Dendritic cell treated with granulocyte-macrophage colony-stimulating factor and Interleukin-4, amounts not matched to agents 40 ng/mL and 50 ng/mL, for 4 days (primary cell): ENCODE measurements at regions of chr2 and their contacts with region 1.

Region 1: DNA sequence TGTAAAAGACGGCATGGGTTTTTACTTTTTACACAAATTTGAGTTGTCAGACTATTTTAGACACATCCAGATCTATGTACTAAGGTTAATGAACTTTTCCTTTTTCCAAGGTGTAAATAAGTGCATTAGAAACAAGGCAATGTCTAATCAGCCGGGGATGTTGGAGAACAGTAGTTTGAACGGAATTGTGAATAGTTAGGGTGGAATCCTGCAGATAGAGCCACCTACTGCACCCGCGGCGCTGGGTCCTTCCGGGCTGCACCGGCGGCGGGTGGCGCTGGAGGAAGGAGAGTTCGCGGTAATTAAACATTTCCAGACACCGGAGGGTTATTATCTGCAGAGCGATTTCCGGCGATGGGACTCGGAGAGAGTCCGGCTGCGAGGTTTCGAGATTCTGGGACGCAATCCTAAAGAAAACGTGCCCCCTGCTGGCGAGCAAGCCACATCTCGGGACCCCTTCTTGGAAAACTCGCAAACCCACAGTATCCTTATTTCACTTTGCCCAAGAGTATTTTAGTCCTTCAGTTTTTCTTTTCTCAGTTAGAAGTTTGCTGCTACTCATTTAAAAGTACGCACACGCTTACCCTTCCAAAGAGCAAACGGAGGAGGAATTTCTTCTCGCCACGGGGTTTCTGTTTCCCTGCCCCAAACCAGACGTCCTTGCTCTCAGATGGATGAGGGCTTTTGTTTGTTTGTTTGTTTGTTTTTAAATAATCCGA is 4.5 kb upstream of the OSR1 start:
- H3K4me3 Mint-ChIP-seq: peak overlapping the region; percentile 87
- H3K27ac Mint-ChIP-seq: peak overlapping the region; percentile 42
- H3K4me1 Mint-ChIP-seq: peaks cover 36% of the 10 kb centered on the region
- H3K27me3 Mint-ChIP-seq: peaks cover 91% of the 10 kb centered on the region

Region 2: DNA sequence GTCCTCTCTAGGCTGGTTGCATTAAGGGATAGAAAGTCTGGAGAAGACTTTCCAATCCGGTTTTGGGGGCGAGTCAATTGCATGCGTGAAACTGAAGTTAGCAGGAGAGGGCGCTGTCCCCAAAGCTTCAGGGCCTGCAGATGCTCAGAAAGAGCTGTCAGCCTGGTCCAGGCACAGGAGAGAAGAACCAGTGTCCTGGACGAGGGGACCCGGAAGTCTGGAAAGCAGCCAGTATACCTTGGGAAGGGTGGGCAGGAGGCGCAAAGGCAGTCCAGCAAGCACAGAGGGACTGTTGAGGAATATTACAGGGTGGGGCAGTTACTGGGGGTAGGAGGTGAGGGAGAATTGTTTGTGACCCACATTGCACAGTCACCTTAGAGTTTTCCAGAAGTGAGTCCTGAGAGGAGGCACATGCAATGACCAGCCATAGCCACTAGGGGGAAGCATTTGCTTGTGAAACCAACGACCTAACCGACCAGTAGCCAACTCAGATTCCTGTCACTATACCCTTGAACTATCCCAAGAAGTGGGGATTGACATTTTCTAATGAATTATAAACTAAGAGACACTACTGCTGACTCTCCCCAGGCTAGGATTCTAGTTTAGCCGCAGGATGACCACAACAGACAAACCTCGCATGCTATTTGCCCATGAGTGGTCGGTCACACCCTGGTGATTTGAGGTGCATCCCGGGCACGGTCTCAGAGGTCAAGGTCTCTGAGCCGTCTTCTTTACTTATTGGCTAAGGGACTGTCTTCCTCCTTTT is 975.3 kb before region 1 on chr2:
- intact Hi-C with region 1: loop called (anchors 10 kb)
- H3K4me3 Mint-ChIP-seq: no peak overlapping the region
- H3K27ac Mint-ChIP-seq: no peak overlapping the region
- H3K4me1 Mint-ChIP-seq: no peaks in the 10 kb centered on the region
- H3K27me3 Mint-ChIP-seq: no peaks in the 10 kb centered on the region

Region 3: DNA sequence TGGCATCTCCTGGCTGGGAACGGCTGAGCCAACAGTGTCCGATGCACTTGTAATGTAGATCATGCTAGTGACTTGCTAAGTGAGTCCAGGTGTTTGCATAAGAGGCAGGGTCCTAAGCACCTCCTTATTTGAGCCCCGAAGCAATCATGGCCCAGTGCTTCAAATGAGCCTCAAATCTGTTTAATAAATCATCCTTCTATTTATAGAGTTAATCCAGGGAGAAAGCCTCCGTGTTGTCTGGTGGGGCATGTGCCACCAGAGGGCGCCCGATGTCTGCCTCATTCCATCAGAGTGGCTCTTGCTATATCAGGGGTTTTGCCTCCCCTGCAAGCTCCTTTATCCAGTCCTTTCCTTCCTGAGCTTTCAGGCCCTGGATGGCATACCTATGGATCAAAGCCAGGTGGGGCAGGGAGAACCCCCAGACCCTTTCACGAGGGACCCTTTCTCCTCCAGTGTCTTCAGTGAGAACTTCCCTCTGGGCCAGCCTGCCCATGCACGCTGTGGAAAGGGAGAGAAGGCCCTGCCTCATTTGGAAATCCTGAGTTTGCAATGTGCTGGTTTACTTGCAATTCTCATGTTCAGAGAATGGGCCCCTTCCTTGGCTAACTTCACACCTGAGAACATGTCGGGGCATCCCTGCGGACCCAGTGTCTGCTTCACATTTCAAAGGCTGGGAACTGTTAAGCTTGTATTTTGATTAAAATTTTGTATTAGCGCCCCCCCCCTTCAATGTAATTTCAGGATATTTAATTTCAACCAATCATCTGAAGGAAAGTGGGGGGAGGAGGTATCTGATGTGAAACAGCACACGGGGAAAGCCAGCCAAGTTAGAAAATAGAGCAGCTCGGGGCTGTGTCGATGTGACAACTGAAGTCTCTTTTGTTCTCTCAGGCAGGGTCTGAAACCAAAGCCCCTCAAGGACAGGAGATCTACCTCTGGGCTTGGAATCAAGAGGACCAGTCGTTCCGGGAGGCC is 842.2 kb before region 1 on chr2:
- intact Hi-C with region 1: loop called (anchors 1 kb)
- H3K4me3 Mint-ChIP-seq: no peak overlapping the region
- H3K27ac Mint-ChIP-seq: no peak overlapping the region
- H3K4me1 Mint-ChIP-seq: no peaks in the 10 kb centered on the region
- H3K27me3 Mint-ChIP-seq: peaks cover 7% of the 10 kb centered on the region

Region 4: DNA sequence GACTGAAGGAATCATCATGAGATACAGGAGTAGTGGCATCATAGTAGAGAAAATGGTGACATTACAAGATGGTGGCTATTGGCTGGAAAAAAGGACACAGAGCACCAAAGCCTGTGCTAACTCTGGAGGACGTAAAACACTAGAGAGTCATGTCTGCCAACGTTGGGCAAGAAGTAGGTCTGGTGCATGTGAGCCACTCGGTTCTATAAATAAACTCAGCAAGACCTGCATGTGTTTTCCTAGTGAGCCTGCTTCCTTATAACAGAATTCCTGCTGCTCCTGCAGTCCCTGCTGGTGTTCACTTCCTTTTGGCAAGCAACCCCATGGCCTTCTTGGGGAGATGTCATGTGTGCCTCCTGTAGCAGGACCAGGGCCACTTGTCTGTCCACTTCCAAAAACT is 329.7 kb before region 1 on chr2:
- intact Hi-C with region 1: no loop called
- H3K4me3 Mint-ChIP-seq: no peak overlapping the region
- H3K27ac Mint-ChIP-seq: no peak overlapping the region
- H3K4me1 Mint-ChIP-seq: no peaks in the 10 kb centered on the region
- H3K27me3 Mint-ChIP-seq: no peaks in the 10 kb centered on the region

Region 5: DNA sequence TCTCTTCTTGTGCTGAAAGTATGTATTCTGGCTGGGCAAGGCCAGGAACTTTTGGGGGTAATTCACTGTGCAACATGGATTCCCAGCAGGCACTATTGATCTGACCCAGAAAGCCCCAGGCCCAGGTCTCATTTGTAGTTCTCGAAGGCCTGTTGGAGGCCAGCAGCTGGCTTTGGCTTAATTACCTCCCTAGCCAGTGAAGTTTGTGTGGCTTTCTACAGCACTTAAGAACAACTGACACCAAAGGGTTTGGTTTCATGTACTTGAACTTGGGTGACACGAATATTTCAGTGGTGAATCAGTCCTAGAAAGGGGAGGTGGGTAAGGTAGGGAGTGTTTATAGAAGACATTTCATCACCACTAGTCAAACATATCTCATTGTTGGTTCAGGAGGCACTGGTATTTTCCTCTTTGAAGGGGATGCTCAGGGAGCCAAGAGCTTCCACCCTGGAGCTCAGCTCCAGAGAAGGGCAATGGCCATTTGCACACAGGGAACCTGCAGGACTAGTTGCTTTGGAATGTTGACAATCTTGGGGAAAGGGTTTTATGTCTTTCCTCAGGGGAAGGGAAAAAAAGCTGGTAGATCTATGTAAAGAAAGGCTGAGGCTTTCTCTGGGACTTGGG is 222.2 kb before region 1 on chr2:
- intact Hi-C with region 1: no loop called
- H3K4me3 Mint-ChIP-seq: no peak overlapping the region
- H3K27ac Mint-ChIP-seq: no peak overlapping the region
- H3K4me1 Mint-ChIP-seq: no peaks in the 10 kb centered on the region
- H3K27me3 Mint-ChIP-seq: no peaks in the 10 kb centered on the region

Region 6: DNA sequence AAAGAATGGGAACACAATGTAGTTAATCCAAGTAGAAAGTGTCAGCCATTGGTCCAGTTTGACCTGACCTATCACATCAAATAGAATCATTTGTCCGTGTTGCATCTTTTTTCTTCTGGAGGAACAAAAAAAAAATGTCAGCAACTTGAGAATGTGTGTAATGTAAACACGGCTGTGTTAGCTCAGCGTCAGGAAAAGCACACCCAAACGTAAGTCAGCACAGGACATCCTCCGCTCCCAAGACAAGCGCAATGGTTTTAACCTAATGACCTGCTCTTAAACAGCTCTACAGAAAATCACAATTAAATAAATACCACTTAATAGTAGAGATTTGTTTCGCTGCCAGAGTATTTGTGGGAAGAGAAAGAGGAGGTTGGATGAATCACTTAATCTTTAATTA is 63.9 kb before region 1 on chr2:
- intact Hi-C with region 1: no loop called
- H3K4me3 Mint-ChIP-seq: no peak overlapping the region
- H3K27ac Mint-ChIP-seq: no peak overlapping the region
- H3K4me1 Mint-ChIP-seq: no peaks in the 10 kb centered on the region
- H3K27me3 Mint-ChIP-seq: no peaks in the 10 kb centered on the region

Region 7: DNA sequence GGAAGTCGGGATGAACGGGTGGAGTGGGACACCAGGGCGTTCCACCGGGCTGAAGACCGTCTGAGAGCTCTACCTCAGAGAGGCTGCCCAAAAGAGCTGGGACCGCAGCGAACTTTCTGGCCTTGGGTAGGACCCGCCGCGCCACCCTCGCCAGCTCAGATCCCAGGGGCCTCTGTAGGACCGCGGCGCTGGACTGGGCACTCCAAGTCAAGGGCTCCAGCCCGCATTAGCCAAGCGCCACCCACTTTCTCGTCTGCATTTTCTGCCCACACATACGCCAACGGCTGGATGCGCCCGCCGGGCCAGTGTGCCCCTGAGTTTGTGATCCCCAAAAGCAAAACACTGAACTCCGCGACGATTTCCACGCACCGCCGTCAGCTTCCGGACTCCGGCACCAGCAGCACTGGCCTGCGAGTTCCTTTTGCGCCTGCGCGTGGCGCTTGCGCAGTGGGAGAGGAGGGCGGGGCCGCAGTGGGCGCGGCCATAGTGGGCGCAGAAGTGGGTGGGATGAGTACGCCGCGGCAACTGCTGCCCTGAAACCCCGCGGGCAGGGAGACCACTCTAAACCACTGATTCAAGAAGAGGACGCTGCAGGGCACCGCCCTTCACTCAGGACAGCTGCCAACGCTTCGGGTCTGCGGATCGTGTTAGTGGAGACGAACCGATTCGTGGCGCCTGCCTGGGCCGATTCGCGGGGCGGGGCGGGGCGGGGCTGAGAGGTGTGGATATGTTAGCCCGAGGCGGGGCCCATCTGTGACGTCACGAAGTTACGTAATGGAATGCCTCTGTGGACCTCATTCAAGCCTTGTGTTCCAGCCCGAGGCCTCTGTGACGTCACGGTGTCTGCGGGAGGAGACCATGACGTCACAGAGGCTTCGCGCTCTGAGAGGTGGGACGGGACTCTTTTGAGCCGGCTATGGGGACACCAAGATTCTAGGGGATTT is 15.0 kb before region 1 on chr2:
- intact Hi-C with region 1: loop called (anchors 1 kb)
- H3K4me3 Mint-ChIP-seq: peak overlapping the region; percentile 97
- H3K27ac Mint-ChIP-seq: peak overlapping the region; percentile 100
- H3K4me1 Mint-ChIP-seq: peaks cover 31% of the 10 kb centered on the region
- H3K27me3 Mint-ChIP-seq: peaks cover 45% of the 10 kb centered on the region

Region 8: GRCh38 chr2:19403785-19404184 is 40.9 kb after region 1 on chr2:
- intact Hi-C with region 1: no loop called
- H3K4me3 Mint-ChIP-seq: no peak overlapping the region
- H3K27ac Mint-ChIP-seq: no peak overlapping the region
- H3K4me1 Mint-ChIP-seq: no peaks in the 10 kb centered on the region
- H3K27me3 Mint-ChIP-seq: no peaks in the 10 kb centered on the region